Aorta (tissue), 5 donors: ENCODE measurements at regions of chr4 and their contacts with region 1.

Region 1: GRCh38 chr4:51923343-51923742 is 80.4 kb downstream of the DCUN1D4 start:
- DNase-seq: no peak
- ATAC-seq: no peak
- H3K4me3 ChIP-seq: no peak overlapping the region
- H3K27ac ChIP-seq: no peak overlapping the region
- H3K4me1 ChIP-seq: no peaks in the 10 kb centered on the region
- H3K27me3 ChIP-seq: no peaks in the 10 kb centered on the region

Region 2: GRCh38 chr4:51906167-51906958 is 17.0 kb before region 1 on chr4:
- intact Hi-C with region 1: loop called in 1 of 2 experiments (anchors 2 kb)
- DNase-seq: no peak
- ATAC-seq: no peak
- H3K4me3 ChIP-seq: no peak overlapping the region
- H3K27ac ChIP-seq: no peak overlapping the region
- H3K4me1 ChIP-seq: no peaks in the 10 kb centered on the region
- H3K27me3 ChIP-seq: no peaks in the 10 kb centered on the region

Region 3: DNA sequence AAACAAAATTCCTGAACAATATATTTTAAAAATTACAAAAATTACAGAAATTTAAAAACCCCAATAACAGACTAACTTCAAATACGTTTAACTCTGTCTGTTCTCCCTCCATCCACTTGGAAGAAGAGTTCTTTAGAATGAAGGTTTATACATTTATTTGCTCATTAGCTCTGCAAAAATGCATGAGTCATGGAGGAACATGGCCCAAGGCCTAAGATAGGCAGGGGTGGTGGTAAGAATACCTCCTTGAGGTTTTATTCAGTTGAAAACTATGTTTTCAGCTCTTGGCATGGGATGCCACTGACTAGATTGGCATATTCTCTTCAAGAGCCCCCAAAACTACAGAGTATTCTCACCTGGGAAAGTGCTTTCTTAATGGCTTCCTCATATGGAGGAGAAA is 105.6 kb after region 1 on chr4:
- intact Hi-C with region 1: no loop called
- DNase-seq: no peak
- ATAC-seq: no peak
- H3K4me3 ChIP-seq: no peak overlapping the region
- H3K27ac ChIP-seq: no peak overlapping the region
- H3K4me1 ChIP-seq: peaks cover 0 to 2% of the 10 kb centered on the region in 2 donors
- H3K27me3 ChIP-seq: no peaks in the 10 kb centered on the region